B cell (primary cell): ENCODE measurements at regions of chr6 and their contacts with region 1.

Region 1: DNA sequence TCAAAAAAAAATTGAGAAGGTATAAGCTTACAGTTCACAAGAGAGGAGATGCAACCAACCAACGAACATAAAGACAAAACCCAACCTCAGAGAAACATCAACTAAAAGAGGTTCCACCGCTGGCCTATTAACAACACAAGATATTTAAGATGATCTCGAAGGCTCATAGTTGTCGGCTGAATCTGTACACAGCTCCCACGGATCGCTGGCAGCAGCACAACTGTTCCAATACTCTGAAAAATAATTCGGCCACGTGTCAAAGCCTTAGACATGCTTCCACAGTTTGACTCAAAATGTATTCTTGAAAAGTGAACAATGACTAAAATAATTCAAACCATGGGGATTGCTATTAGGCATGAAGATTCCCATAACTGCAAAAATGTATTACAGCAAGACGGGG is 13.7 kb downstream of the EXOC2 start:
- DNase-seq: no peak
- ATAC-seq: no peak
- H3K4me3 ChIP-seq: no peak overlapping the region
- H3K4me3 Mint-ChIP-seq: no peak overlapping the region
- H3K27ac ChIP-seq: no peak overlapping the region
- H3K27ac Mint-ChIP-seq: no peak overlapping the region
- H3K4me1 ChIP-seq: peaks cover 3 to 5% of the 10 kb centered on the region in 2 donors
- H3K4me1 Mint-ChIP-seq: peaks cover 43% of the 10 kb centered on the region
- H3K27me3 ChIP-seq: no peaks in the 10 kb centered on the region
- H3K27me3 Mint-ChIP-seq: no peaks in the 10 kb centered on the region
- CTCF ChIP-seq: no peak

Region 2: DNA sequence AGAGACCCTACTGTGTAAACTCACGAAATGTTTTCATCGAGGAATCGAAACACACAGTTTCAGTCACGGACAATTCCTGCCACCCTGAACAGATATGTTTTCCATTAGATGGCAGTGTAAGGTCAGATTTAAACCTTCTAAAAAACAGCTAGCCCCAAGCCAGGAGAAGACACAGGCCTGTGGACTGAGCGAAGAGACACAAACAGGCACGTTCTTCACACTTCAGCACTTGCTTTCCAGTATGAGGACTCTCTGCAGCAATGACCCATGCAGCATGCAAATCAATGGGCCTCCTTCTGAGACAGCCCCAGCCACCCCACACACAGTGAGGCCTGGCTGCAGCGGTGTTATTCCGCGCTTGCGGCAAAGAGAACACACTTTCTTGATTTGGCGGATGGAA is 54.3 kb before region 1 on chr6:
- CTCF ChIA-PET with region 1: no interaction called
- POLR2A ChIA-PET with region 1: no interaction called
- intact Hi-C with region 1: loop called (anchors 10 kb)
- DNase-seq: no peak
- ATAC-seq: no peak
- H3K4me3 ChIP-seq: no peak overlapping the region
- H3K4me3 Mint-ChIP-seq: no peak overlapping the region
- H3K27ac ChIP-seq: no peak overlapping the region
- H3K27ac Mint-ChIP-seq: no peak overlapping the region
- H3K4me1 ChIP-seq: peaks cover 6 to 14% of the 10 kb centered on the region in 2 donors
- H3K4me1 Mint-ChIP-seq: peaks cover 15% of the 10 kb centered on the region
- H3K27me3 ChIP-seq: no peaks in the 10 kb centered on the region
- H3K27me3 Mint-ChIP-seq: no peaks in the 10 kb centered on the region
- CTCF ChIP-seq: no peak